K562 (cell line): ENCODE measurements at regions of chr22 and their contacts with region 1.

Region 1: DNA sequence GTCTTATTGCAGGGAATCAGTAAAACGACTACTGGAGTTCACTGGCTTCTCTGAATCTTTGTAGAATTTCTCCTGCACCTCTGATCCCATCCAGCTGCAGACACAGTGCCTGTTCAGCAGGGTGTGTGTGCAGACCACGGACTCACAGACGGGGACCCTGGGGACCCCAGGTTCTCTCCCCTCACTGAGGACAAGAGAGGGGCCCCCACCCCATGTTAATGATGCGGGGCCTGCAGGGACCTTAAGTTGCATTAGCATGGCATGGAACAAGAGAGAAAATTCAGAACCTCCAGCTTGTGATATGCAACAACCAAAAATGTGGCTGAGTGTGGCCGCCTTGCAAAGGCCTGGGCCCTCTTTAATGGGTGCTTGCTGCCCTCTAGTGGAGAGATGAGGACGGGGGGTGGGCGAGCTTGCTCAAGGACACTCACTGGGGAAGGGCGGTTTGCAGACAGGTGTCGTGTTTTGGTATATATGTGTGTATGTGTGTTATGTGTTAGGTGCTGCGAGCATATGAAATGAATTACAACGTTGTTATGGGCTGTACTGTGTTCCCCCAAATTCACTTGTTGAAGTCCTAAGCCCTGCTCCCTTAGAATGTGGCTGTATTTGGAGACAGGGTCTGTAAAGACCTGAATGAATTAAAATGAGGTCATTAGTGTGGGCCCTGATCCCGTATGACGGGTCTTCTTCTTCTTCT is 84.4 kb upstream of the SEPTIN5 start:
- DNase-seq: peak; percentile 98 to 100 (median 100)
- ATAC-seq: peak; percentile 89
- H3K4me3 ChIP-seq: no peak overlapping the region
- H3K27ac ChIP-seq: no peak overlapping the region
- H3K4me1 ChIP-seq: peaks cover 15 to 27% of the 10 kb centered on the region in 2 experiments; a peak in 4 of 5 replicates
- H3K27me3 ChIP-seq: peaks cover 2 to 20% of the 10 kb centered on the region in 2 experiments; a peak in 4 of 5 replicates
- CTCF ChIP-seq: peak; percentile 99 to 100 (median 99)
- EP300 ChIP-seq: peak; percentile 48; the same call in 1 of the 2 replicates
- POLR2A ChIP-seq: no peak
- RAD21 ChIP-seq: peak; percentile 100

Region 2: GRCh38 chr22:19122143-19122751 is 507.6 kb before region 1 on chr22 and contains the start of gene DGCR2:
- CTCF ChIA-PET with region 1: no interaction called
- POLR2A ChIA-PET with region 1: interaction called, 4 read pairs
- in situ Hi-C with region 1: no loop called
- intact Hi-C with region 1: loop called (anchors 10 kb)
- DNase-seq: peak; percentile 100
- ATAC-seq: peak; percentile 96
- H3K4me3 ChIP-seq: peak within 1 kb of the TSS; percentile 77
- H3K27ac ChIP-seq: peak within 1 kb of the TSS; percentile 77
- H3K4me1 ChIP-seq: peaks cover 30 to 52% of the 10 kb centered on the region in 2 experiments
- H3K27me3 ChIP-seq: peaks cover 18 to 26% of the 10 kb centered on the region in 2 experiments; a peak in 4 of 5 replicates
- CTCF ChIP-seq: no peak; a peak in 1 of 6 replicates
- EP300 ChIP-seq: 0 out of 2 replicates have a peak, but pooled peaks have one; percentile 3
- POLR2A ChIP-seq: peak; percentile 98
- RAD21 ChIP-seq: no peak
- polyA plus RNA-seq, gene DGCR2: 0.69 to 0.70 TPM

Region 3: DNA sequence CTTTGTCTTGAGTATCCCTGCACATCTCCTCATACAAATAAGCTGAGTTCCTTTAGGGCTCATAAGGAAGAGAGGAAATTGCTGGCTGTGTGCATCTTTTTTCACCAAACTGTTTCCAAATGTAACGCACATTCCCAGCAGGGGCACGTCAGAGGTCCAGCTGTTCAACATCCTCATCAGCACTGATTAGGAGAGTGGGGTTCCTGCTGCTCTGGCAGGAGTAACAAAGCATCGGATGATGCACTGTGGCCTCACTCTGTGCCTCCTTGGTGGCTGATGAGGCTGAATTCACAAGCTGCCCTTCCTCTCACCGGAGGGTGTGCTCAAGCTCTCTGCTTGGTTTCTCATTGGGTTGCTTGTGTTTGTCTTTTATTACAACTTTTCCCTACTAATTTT is 415.8 kb before region 1 on chr22:
- CTCF ChIA-PET with region 1: interaction called, 6 read pairs
- POLR2A ChIA-PET with region 1: no interaction called
- in situ Hi-C with region 1: no loop called
- intact Hi-C with region 1: loop called (anchors 1 kb)
- DNase-seq: peak in 1 of 4 experiments; percentile 38
- ATAC-seq: no peak
- H3K4me3 ChIP-seq: no peak overlapping the region
- H3K27ac ChIP-seq: no peak overlapping the region
- H3K4me1 ChIP-seq: peaks cover 9 to 13% of the 10 kb centered on the region in 2 experiments
- H3K27me3 ChIP-seq: peaks cover 30 to 37% of the 10 kb centered on the region in 2 experiments
- CTCF ChIP-seq: no peak
- EP300 ChIP-seq: no peak
- POLR2A ChIP-seq: no peak
- RAD21 ChIP-seq: 0 out of 4 replicates have a peak, but pooled peaks of 1 of the 2 experiments have one; percentile 9

Region 4: DNA sequence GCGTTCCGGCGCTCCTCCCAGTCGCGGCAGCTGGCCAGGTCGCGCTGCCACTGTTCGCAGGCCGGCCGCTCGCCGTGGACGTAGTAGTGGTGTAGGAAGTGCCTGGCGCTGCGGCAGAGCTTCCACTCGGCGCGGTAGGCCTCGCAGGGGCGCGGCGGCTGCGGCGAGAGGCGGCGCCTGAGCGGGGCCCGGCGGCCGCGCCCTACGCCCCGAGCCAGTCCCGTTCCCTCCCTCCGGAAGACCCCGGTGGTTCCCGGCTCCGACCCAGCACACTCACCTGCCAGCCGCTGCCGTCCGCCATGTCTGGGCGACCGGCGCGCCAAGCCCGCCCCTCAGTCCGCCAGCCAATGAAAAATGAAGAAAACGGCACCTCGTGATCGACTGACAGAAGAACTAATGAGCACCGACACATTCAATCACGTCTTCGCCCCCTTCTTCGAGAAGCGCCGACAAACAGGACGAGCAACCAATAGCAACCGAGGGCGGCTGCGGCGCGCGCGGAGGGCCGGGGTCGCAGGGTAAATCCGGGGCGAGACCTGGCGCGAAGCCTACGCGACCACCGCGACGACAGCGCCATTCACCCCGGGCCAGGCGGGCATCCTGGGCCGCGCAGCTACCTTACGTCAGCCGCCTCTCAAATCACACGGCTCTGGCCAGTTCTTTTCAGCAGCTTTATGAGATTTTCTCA is 182.3 kb before region 1 on chr22 and contains the start of gene C22orf39:
- CTCF ChIA-PET with region 1: no interaction called
- POLR2A ChIA-PET with region 1: interaction called, 7 read pairs
- in situ Hi-C with region 1: no loop called
- intact Hi-C with region 1: loop called (anchors 10 kb)
- DNase-seq: peak; percentile 99 to 100 (median 100)
- ATAC-seq: peak; percentile 95
- H3K4me3 ChIP-seq: peak within 1 kb of the TSS; percentile 73
- H3K27ac ChIP-seq: peak within 1 kb of the TSS; percentile 86
- H3K4me1 ChIP-seq: peaks cover 27 to 38% of the 10 kb centered on the region in 2 experiments
- H3K27me3 ChIP-seq: no peaks in the 10 kb centered on the region
- CTCF ChIP-seq: 0 out of 6 replicates have a peak, but pooled peaks of 1 of the 3 experiments have one; percentile 4
- EP300 ChIP-seq: 0 out of 2 replicates have a peak, but pooled peaks have one; percentile 14
- POLR2A ChIP-seq: peak; percentile 97
- RAD21 ChIP-seq: peak; percentile 31 to 47
- polyA plus RNA-seq, gene C22orf39: 20.4 to 25.9 TPM

Region 5: DNA sequence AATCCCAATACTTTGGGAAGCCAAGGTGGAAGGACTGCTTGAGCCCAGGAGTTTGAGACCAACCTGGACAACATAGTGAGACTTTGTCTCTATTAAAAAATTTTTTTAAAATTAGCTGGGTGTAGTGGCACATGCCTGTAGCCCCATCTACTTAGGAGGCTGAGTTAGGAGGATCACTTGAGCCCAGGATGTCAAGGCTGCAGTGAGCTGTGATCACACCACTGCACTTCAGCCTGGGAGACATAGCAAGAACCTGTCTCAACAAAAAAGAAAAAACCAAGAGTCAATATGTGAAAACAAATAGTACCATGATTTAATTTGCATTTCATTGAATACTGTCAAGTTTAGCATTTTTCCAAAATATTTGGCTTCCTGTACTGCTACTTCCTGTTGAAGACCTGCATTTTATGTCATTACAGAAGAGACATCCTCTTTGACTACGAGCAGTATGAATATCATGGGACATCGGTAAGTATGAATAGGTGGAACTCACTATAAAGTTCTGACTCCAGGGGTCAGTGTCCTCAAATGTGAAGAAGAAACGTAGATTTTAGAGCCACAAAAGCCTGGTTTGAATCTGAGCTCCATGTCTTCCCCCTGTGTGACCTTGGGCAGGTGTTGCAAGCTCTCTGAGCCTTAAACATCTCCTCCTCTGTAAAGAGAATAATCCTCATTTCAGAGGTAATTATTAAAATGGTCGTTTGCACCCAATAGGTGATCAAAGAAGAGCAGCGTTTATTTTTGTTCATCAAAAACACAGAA is 134.1 kb before region 1 on chr22:
- CTCF ChIA-PET with region 1: interaction called, 27 read pairs
- POLR2A ChIA-PET with region 1: interaction called, 5 read pairs
- in situ Hi-C with region 1: no loop called
- intact Hi-C with region 1: no loop called
- DNase-seq: peak in 1 of 4 experiments; percentile 69
- ATAC-seq: no peak
- H3K4me3 ChIP-seq: no peak overlapping the region
- H3K27ac ChIP-seq: no peak overlapping the region
- H3K4me1 ChIP-seq: no peaks in the 10 kb centered on the region; a peak in 2 of 5 replicates
- H3K27me3 ChIP-seq: no peaks in the 10 kb centered on the region
- CTCF ChIP-seq: peak in 2 of 3 experiments; percentile 25 to 36; a peak in 4 of 6 replicates
- EP300 ChIP-seq: no peak
- POLR2A ChIP-seq: no peak
- RAD21 ChIP-seq: peak; percentile 48 to 51; a peak in 3 of 4 replicates

Region 6: DNA sequence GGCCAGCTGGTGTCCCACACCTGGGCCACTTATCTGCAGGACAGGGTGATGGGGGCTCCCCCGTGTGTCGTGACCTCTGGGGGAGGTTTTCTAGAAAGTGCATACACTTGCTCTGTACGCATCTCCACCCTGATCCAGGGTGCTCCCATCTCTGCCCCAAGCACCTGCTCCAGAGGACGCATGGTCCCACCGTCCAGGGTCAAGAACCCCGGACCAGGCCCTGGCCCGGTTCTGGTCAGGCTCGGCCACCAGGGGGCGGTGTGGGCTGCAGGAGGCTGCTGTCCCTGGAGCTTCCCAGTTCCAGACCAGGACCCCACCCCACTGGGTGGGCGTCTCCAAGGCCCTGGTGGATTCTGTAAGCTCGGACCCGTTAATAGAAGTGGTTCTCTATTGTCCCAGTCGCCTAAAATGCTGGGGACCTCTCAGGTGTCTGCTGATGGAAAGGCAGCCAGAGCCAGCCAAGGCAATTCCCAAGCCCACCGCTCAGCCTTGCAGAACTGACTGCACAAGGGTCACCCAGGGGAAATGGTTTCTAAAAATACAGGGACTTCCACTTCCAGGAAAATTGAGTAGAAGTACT is 49.7 kb after region 1 on chr22:
- CTCF ChIA-PET with region 1: no interaction called
- POLR2A ChIA-PET with region 1: no interaction called
- in situ Hi-C with region 1: no loop called
- intact Hi-C with region 1: no loop called
- DNase-seq: peak; percentile 86 to 99 (median 96)
- ATAC-seq: peak; percentile 94
- H3K4me3 ChIP-seq: no peak overlapping the region
- H3K27ac ChIP-seq: no peak overlapping the region
- H3K4me1 ChIP-seq: peaks cover 4 to 12% of the 10 kb centered on the region in 2 experiments; a peak in 4 of 5 replicates
- H3K27me3 ChIP-seq: peaks cover 14% of the 10 kb centered on the region in 2 experiments
- CTCF ChIP-seq: peak; percentile 98 to 100 (median 99)
- EP300 ChIP-seq: peak; percentile 51; the same call in 1 of the 2 replicates
- POLR2A ChIP-seq: no peak
- RAD21 ChIP-seq: peak; percentile 91 to 100; a peak in 3 of 4 replicates

Region 7: DNA sequence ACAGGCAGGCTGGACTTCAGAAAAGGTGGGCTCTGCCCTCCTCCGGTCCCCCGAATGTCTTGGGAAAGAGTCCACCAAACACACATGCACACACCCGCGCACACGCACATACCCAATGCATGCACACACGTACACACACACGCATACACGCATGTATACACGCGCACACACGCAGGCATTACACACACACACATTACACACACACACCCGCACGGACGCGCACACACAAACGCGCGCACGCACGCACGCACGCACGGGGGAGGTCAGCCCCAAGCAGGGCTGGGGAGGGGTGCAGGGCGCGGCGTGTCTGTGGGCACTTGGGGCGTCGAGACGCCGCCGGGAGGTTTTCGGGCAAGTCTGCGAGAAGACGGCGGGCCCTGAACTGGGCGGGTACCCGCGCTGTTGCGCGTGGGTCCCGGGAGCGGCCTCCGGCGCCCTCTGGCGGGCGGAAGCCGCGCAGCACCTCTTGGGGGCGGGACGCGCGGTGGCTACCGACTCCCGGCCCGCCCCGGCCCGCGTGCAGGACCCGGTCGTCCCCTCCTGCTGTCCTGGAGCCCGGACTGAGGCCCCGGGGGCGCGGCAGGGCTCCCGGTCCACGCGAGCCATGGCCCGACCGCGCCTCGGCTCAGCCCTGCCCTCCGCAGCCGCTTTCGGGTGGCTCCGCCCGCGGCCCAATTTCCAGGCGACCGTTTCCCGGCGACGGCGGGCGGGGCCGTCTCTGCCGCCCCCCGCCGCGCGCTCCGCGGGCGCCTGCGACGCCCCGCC is 88.0 kb after region 1 on chr22:
- CTCF ChIA-PET with region 1: interaction called, 19 read pairs
- POLR2A ChIA-PET with region 1: interaction called, 4 read pairs
- in situ Hi-C with region 1: no loop called
- intact Hi-C with region 1: loop called (anchors 1 kb)
- DNase-seq: peak; percentile 98 to 99 (median 98)
- ATAC-seq: peak; percentile 69
- H3K4me3 ChIP-seq: peak overlapping the region; percentile 51
- H3K27ac ChIP-seq: peak overlapping the region; percentile 92
- H3K4me1 ChIP-seq: peaks cover 62 to 97% of the 10 kb centered on the region in 2 experiments
- H3K27me3 ChIP-seq: peaks cover 0 to 10% of the 10 kb centered on the region in 2 experiments; a peak in 2 of 5 replicates
- CTCF ChIP-seq: peak; percentile 98 to 100 (median 98)
- EP300 ChIP-seq: peak; percentile 47; the same call in 1 of the 2 replicates
- POLR2A ChIP-seq: peak; percentile 2; the same call in 1 of the 2 replicates
- RAD21 ChIP-seq: peak in 1 of 2 experiments; percentile 100; a peak in 2 of 4 replicates